ENCODE measurements at regions of chr9 and their contacts with region 1.

Region 1: DNA sequence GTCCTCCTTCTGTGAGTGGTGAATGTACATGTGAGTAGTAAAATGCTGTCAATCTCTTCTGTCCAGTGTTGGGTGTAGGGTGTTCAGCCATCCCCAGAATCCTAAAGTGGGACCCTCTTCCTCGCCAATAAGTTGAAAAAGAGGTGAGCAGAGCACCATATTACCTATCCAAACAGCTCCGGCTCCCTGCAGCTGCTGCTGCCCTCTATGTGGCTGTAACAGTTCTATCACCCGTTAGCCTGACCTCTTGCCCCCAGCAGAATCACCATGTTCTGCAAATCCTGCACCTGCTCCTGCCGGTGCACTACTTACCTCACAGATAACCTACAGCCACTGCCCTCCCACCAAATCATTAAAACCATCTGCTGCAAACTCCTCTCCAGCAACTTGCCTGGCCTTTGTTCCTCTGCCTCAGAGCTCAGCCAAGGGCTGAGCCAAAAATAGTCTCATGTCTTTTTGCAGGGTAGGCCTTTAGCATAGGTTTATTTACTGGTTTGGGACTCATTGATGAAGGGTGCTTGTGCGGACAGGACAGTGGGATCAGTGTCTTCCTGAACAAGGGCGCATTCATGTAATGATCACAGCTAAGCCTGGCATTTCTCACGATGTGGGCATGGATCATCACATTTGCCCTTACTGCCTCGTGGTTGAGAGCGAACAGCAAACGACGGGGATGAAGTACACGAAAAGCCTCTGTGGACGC is 49.6 kb upstream of the CCL21 start:
- DNase-seq: no peak
- ATAC-seq: no peak
- H3K4me3 ChIP-seq: no peak overlapping the region
- H3K4me3 Mint-ChIP-seq: no peak overlapping the region
- H3K27ac ChIP-seq: no peak overlapping the region
- H3K27ac Mint-ChIP-seq: no peak overlapping the region
- H3K4me1 ChIP-seq: peaks cover 3% of the 10 kb centered on the region
- H3K4me1 Mint-ChIP-seq: peaks cover 0 to 5% of the 10 kb centered on the region in 2 donors
- H3K27me3 ChIP-seq: peaks cover 12% of the 10 kb centered on the region
- H3K27me3 Mint-ChIP-seq: peaks cover 19 to 34% of the 10 kb centered on the region in 2 donors
- CTCF ChIP-seq: no peak

Region 2: DNA sequence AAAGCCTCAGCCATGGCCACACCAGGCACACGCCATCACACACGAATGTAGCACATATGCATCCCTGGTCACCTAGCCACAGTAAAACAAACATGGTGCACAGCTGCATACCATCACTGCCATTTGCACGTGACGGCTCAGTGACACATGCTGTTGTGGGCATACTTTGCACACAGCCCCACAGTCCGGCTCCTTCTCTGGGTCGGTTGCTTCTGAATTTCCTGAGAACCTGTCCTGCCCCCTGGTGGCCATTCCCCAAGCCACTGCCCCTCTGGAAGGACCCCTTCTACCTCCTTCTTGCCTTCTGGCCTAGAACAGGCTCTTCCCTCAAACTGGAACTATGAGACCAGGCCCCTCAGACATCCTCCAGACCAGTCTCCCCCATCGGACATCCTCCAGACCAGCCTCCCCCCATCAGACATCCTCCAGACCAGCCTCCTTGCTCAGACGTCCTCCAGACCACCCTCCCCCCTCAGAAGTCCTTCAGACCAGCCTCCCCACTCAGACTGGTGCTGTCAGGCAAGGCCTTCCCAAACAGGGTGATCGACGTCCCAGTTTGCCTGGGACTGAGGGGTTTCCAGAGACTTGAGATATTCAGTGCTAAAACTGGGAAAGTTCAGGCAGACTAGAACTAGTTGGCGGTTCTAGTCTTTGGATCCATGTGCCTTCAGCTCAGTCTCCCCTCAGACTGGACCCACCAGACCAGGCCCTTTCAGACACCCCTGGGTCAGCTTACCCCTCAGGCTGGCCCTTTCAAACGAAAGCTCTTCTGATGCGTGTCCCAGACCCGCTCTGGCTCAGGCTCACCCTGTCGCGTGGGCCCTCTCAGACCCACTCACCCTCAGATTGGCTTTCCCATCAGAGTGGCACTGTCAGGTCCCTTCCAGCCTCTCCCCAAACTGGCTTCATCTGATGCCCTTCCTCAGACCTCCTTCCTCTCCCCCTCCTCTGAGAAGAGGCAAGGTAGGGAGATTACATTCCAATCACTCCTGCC is 212.5 kb before region 1 on chr9:
- intact Hi-C with region 1: no loop called
- DNase-seq: peak in 1 of 2 donors; percentile 64
- ATAC-seq: peak in 2 of 3 donors; percentile 68 to 72
- H3K4me3 ChIP-seq: no peak overlapping the region
- H3K4me3 Mint-ChIP-seq: no peak overlapping the region
- H3K27ac ChIP-seq: no peak overlapping the region
- H3K27ac Mint-ChIP-seq: no peak overlapping the region
- H3K4me1 ChIP-seq: no peaks in the 10 kb centered on the region
- H3K4me1 Mint-ChIP-seq: no peaks in the 10 kb centered on the region
- H3K27me3 ChIP-seq: no peaks in the 10 kb centered on the region
- H3K27me3 Mint-ChIP-seq: peaks cover 0 to 13% of the 10 kb centered on the region in 2 donors
- CTCF ChIP-seq: peak; percentile 21

Region 3: DNA sequence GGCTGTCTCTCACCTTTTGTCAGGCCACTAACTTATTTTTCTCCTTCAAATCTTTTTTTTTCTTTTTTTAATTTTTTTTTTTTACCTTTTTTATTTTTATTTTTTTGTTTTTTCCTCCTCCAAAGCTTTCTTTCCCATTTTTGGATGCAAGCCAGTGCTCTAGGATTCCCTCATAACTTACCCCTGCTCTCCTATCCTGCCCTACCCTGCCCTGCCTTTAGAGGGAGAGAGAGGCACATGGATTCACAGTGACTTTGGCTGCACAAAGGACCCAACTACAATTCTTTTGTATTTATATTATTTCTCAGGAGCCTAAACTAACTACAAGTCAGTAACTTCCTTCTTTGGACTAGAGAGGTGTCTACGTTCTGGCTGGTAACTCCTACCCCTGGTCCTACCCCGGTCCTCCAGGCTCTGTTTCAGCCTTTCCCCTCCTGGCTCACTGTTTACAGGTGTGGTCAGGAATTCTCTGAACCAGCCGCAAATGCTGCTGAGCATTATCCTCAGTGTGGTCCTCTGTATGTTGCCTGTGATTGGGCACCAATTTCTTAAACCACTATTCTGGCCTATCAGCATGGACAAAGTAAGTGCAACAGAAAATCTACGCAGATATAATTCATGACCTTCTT is 721.9 kb after region 1 on chr9:
- intact Hi-C with region 1: loop called (anchors 5 kb)
- DNase-seq: peak in 1 of 2 donors; percentile 34
- ATAC-seq: peak in 1 of 3 donors; percentile 55
- H3K4me3 ChIP-seq: no peak overlapping the region
- H3K4me3 Mint-ChIP-seq: no peak overlapping the region
- H3K27ac ChIP-seq: no peak overlapping the region
- H3K27ac Mint-ChIP-seq: no peak overlapping the region
- H3K4me1 ChIP-seq: no peaks in the 10 kb centered on the region
- H3K4me1 Mint-ChIP-seq: no peaks in the 10 kb centered on the region
- H3K27me3 ChIP-seq: peaks cover 7% of the 10 kb centered on the region
- H3K27me3 Mint-ChIP-seq: peaks cover 4 to 15% of the 10 kb centered on the region in 2 donors
- CTCF ChIP-seq: peak; percentile 12

Measured in natural killer cell (primary cell).